GM10248 (cell line): ENCODE measurements at regions of chr1 and their contacts with region 1.

Region 1: DNA sequence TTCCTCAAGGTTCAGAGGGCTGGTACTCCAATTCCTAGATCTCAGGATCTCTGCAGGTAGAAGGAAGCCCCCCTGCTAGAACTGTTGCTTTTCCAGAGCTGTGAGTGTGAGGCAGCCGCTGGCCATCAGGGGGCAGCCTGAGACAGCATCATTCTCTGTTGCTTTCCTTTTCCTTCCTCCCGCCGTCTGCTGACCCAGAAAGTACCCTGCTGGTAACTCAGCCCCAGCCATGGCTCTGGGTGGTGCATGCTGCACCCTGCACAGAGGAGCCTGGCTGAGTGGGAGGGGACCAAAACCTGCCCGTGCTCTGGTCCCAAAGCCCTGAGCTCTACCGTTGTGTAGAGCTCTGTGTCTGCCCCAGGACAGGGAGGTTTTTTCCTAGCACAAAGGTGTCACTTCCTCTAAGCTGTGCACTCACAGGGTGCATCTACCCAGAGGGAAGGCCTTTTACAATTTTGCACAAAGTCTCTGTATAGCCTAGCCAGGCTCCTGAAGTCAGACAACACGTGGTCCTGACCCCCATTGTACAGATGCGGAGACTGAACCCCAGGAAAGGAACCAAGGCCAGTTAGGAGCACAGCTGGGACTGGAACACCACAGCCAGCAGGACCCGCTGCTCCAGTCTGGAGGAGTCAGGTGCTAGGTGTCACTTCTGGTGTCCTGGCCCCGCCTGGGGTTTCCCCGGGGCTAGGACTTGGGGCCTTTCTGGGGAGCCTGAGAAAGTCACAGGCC is 5.6 kb upstream of the FAM131C start:
- DNase-seq: peak; percentile 84
- CTCF ChIP-seq: peak; percentile 89

Region 2: DNA sequence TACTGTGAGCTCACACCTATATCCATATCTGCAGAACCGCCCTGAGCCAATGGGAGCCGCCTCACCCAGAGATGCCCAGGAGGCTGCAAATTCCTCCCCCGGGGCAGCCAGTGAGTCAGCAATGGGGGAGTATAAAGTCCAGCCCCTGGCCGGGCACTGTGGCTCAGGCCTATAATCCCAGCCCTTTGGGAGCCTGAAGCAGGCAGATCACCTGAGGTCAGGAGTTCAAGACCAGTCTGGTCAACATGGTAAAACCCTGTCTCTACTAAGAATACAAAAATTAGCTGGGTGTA is 40.5 kb before region 1 on chr1:
- CTCF ChIA-PET with region 1: no interaction called
- POLR2A ChIA-PET with region 1: no interaction called
- DNase-seq: no peak
- CTCF ChIP-seq: no peak

Region 3: GRCh38 chr1:16055613-16056520 is 23.2 kb before region 1 on chr1:
- CTCF ChIA-PET with region 1: interaction called, 13 read pairs
- POLR2A ChIA-PET with region 1: no interaction called
- DNase-seq: peak; percentile 93
- CTCF ChIP-seq: peak; percentile 98

Region 4: GRCh38 chr1:16164213-16165072 is 85.4 kb after region 1 on chr1:
- CTCF ChIA-PET with region 1: interaction called, 15 read pairs
- POLR2A ChIA-PET with region 1: no interaction called
- DNase-seq: no peak
- CTCF ChIP-seq: no peak

Region 5: GRCh38 chr1:16204634-16205337 is 125.7 kb after region 1 on chr1:
- CTCF ChIA-PET with region 1: interaction called, 10 read pairs
- POLR2A ChIA-PET with region 1: no interaction called
- DNase-seq: peak; percentile 55
- CTCF ChIP-seq: peak; percentile 64

Region 6: DNA sequence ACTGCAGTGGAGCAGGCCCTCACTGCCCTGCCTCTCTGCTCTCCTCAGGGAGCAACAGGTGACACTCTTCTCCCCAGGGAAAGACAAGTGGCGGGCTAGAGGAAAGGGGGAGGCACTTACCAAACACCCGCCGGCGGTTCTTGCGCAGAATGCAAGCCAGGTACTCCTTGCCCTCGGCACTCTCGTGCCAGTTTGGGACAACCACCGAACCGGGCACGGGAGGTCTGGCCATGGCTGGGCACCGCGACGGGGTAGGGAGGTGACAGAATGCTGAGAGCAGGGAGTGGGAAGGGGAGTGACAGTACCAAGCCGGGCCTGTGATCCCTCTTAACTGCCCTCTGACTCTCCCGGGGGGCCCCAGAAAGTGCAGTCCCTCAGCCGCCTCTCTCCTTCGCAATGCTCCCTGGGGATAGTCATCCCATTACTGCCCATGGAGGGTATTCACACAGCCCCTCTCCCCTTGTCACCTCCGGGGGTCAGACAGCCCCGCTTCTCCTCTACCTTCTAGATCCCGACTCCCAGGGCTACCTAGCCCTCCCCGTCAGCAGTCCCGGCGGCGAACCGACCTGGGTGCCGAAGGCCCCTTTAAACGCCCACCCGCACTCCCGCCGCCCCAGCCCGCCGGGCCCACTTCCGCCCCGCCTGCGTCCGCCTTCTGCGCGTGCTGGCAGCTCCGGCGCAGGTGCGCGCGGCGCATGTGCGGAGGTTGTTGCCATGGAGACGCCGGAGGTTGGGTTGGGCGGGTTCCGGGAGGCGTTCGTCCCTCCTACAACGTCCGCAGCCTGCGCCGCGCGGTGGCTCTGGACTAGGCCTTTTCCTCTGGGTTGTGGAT is 157.6 kb after region 1 on chr1 and contains the start of gene CPLANE2:
- CTCF ChIA-PET with region 1: interaction called, 70 read pairs
- POLR2A ChIA-PET with region 1: no interaction called
- DNase-seq: peak; percentile 97
- CTCF ChIP-seq: peak; percentile 10

Region 7: DNA sequence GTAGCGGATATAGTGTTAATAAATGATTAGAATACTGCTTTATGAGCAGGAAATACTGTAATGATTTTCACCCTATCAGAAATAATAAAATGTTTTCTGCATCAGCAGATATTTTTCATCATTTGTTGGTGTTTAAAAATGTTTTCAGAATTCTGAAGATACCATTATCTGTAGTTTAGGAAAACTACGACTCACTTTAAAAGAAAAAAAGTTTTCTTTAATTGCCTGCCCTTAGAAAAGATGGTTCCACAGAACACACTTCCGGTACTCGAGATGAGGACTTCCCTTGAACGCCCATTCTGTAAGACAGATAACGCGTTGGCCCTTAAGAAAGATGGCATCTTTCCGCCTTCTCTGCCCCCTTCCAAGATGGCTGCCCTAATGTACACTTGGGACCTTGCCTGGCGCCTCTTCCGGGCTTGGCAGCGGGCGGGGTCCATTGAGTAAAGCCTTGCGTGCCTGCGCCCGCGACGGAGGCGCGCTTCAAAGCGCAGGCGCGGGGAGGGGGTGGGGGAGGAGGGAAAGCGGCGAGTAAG is 287.7 kb after region 1 on chr1 and contains the start of gene SZRD1:
- CTCF ChIA-PET with region 1: interaction called, 19 read pairs
- POLR2A ChIA-PET with region 1: interaction called, 3 read pairs
- DNase-seq: peak; percentile 91
- CTCF ChIP-seq: no peak